HepG2 (cell line): ENCODE measurements at regions of chr5 and their contacts with region 1.

Region 1: GRCh38 chr5:96614110-96614691 is 48.0 kb upstream of the CAST start:
- DNase-seq: peak; percentile 68
- ATAC-seq: peak; percentile 83
- H3K4me3 ChIP-seq: peak overlapping the region in 2 of 3 experiments; percentile 15 to 24; a peak in 1 of 6 replicates
- H3K27ac ChIP-seq: no peak overlapping the region
- H3K4me1 ChIP-seq: peaks cover 21% of the 10 kb centered on the region
- H3K27me3 ChIP-seq: no peaks in the 10 kb centered on the region
- CTCF ChIP-seq: peak; percentile 79
- EP300 ChIP-seq: no peak
- POLR2A ChIP-seq: no peak
- RAD21 ChIP-seq: peak; percentile 70

Region 2: DNA sequence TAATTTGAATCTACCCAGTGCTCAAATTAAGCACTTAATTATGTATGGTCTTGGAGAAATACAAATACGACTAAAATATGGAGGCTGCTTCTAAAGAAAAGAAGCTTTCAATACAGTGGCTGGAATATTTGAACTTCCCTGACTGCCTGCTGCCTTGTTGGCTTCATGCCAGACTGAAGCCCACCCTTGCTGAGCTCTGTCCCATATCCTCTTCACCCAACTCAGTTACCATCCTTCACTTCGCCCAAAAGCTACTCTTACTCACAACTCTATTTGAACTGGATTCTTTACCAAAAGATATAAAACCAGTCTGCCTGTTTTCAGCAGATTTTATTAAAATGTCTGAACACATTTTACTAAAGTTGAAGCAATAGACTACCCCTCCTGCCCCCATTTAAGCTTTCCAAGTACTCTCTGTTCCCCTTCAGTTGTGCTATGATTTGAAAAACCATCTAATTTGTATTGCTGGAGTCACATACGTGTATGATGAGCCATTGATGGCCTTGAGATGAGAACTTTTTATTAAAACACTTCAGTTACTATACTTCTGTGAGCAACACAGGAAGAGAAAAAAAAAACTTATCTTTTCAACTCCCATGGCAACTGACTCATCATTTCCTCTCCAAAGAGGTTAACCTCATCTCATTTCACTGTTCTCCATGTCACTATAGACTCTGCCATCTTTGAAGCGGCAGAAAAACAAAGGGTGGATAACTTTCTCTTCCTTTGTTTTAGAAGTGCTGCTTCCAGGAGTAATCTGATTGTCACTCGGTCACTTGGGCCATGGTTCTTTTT is 77.0 kb before region 1 on chr5:
- CTCF ChIA-PET with region 1: no interaction called
- POLR2A ChIA-PET with region 1: no interaction called
- in situ Hi-C with region 1: no loop called
- intact Hi-C with region 1: no loop called
- DNase-seq: no peak
- ATAC-seq: no peak
- H3K4me3 ChIP-seq: no peak overlapping the region
- H3K27ac ChIP-seq: no peak overlapping the region
- H3K4me1 ChIP-seq: no peaks in the 10 kb centered on the region
- H3K27me3 ChIP-seq: no peaks in the 10 kb centered on the region
- CTCF ChIP-seq: no peak
- EP300 ChIP-seq: no peak
- POLR2A ChIP-seq: no peak
- RAD21 ChIP-seq: no peak

Region 3: DNA sequence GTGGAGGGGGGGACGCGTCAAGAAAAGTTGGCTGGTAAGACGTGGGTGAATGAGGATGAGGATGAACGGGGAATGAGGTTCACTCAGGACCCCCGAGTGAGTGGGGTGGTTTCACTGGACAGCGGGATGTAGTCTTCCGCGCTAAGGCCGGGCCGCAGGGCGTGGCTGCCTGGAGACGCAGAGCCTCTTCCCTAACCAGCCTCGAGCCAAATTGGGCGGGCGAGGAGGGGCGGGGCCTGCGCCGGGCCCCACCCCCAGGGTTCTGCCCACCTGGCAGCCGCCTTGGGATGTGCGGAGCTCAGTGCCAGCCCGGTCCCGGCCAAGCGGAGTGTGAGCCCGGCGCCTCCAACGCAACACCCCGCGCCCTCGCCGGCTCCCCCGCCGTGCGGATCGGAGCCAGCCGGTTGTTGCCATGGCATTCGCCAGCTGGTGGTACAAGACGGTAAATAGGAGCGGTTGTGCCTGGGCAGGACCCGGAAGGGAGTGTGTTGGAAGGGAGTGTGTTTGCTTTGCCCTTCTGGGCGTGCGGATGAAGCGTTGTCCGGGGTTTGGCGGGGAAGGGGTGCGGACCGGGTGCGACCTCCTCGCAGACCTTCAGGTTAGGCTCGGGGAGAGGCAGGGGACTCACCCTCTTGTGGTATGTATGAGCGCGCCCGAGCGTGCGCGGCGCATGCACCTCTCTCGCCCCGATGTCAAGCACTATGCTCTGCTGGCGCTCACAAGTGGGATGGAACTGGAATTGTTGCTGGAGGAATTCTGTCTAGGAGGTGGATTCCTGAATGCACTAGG is 48.7 kb after region 1 on chr5:
- CTCF ChIA-PET with region 1: no interaction called
- POLR2A ChIA-PET with region 1: no interaction called
- in situ Hi-C with region 1: no loop called
- intact Hi-C with region 1: loop called (anchors 2 kb)
- DNase-seq: peak; percentile 69
- ATAC-seq: peak; percentile 82
- H3K4me3 ChIP-seq: peak overlapping the region; percentile 87 to 94 (median 94)
- H3K27ac ChIP-seq: peak overlapping the region; percentile 59
- H3K4me1 ChIP-seq: peaks cover 28% of the 10 kb centered on the region
- H3K27me3 ChIP-seq: no peaks in the 10 kb centered on the region; a peak in 2 of 5 replicates
- CTCF ChIP-seq: no peak
- EP300 ChIP-seq: no peak
- POLR2A ChIP-seq: peak; percentile 27 to 42; a peak in 1 of 4 replicates
- RAD21 ChIP-seq: no peak

Region 4: GRCh38 chr5:96687812-96688453 is 73.7 kb after region 1 on chr5:
- CTCF ChIA-PET with region 1: interaction called, 25 read pairs
- POLR2A ChIA-PET with region 1: no interaction called
- in situ Hi-C with region 1: loop called (anchors 5 kb)
- intact Hi-C with region 1: loop called (anchors 1 kb)
- DNase-seq: peak; percentile 49
- ATAC-seq: peak; percentile 95
- H3K4me3 ChIP-seq: no peak overlapping the region
- H3K27ac ChIP-seq: no peak overlapping the region
- H3K4me1 ChIP-seq: peaks cover 9% of the 10 kb centered on the region; the same call in 1 of the 2 replicates
- H3K27me3 ChIP-seq: no peaks in the 10 kb centered on the region
- CTCF ChIP-seq: peak; percentile 63
- EP300 ChIP-seq: no peak
- POLR2A ChIP-seq: no peak
- RAD21 ChIP-seq: peak; percentile 33; the same call in 1 of the 2 replicates

Region 5: DNA sequence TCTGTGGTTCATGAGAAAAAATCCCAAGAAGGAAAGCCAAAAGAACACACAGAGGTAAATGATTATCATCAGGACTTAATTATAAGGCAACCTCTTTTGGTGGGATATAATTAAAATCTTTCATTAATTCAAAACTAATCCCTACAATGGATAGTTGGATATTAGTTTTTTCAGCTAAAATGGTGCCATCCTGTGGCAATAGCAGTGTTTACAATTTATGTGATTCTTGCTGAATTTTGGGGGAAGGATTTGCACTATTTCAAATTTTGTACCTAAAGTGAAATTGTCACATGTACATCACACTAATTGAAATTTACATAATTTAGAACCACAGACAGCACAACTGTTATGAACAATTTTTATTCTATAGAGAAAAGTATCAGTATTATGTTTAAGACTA is 115.0 kb after region 1 on chr5:
- CTCF ChIA-PET with region 1: interaction called, 4 read pairs
- POLR2A ChIA-PET with region 1: no interaction called
- in situ Hi-C with region 1: no loop called
- intact Hi-C with region 1: loop called (anchors 1 kb)
- DNase-seq: no peak
- ATAC-seq: no peak
- H3K4me3 ChIP-seq: no peak overlapping the region
- H3K27ac ChIP-seq: no peak overlapping the region
- H3K4me1 ChIP-seq: no peaks in the 10 kb centered on the region
- H3K27me3 ChIP-seq: no peaks in the 10 kb centered on the region
- CTCF ChIP-seq: peak; percentile 34; the same call in 1 of the 2 replicates
- EP300 ChIP-seq: no peak
- POLR2A ChIP-seq: no peak
- RAD21 ChIP-seq: no peak